CD8-positive, alpha-beta memory T cell (primary cell): ENCODE measurements at regions of chr13 and their contacts with region 1.

Region 1: GRCh38 chr13:100573121-100573520 is 15.5 kb downstream of the GGACT start:
- DNase-seq: peak; percentile 53 to 77 (median 65)
- H3K4me3 ChIP-seq: no peak overlapping the region
- H3K4me3 Mint-ChIP-seq: no peak overlapping the region
- H3K27ac ChIP-seq: no peak overlapping the region
- H3K27ac Mint-ChIP-seq: no peak overlapping the region
- H3K4me1 ChIP-seq: peaks cover 13% of the 10 kb centered on the region
- H3K4me1 Mint-ChIP-seq: peaks cover 12 to 18% (median 16%) of the 10 kb centered on the region in 3 donors
- H3K27me3 ChIP-seq: no peaks in the 10 kb centered on the region
- H3K27me3 Mint-ChIP-seq: no peaks in the 10 kb centered on the region

Region 2: DNA sequence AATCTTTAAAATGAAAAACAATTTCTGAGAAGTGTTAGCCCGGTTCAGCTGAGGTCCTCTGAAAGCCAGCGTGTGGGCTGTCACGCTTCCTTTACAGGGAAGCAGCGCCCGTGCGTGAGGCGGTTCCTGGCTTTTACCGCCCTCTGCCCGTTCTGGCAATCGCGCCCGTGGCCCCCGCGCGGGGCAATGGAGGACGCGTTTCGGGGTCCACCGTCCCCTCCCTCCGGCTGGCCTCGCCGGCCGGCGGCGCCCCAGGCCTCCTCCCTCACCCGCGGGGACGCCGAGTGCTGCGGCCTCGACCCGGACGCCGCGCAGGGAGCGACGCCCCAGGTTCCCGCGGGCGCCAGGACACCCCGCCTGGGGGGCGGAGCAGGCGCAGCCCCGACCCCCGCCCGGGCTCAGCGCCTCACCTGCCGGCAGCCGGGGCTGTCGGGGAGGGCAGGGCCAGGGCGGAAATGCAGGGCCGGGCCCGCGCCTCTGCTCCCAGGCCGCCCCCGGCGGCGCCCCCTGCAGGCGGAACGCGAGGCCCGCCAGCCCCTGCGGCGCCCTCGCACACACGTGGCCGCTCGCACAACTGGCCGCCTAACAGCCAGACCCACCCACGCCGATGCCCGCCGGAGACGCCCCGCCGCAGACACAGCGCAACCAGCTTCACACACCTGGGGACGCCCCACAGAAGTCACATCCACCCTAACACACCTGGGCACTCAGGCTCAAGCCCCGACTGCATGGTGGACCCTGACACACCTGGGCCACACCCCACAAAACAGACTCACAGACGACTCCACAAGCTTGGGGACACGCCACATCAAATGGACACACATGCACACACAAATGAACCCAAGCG is 15.4 kb after region 1 on chr13 and contains the start of gene GGACT:
- CTCF ChIA-PET with region 1: interaction called, 47 read pairs
- POLR2A ChIA-PET with region 1: interaction called, 5 read pairs
- DNase-seq: peak; percentile 75 to 87 (median 83)
- H3K4me3 ChIP-seq: peak within 1 kb of the TSS; percentile 54
- H3K4me3 Mint-ChIP-seq: peak within 1 kb of the TSS; percentile 81 to 91 (median 86)
- H3K27ac ChIP-seq: peak within 1 kb of the TSS; percentile 59
- H3K27ac Mint-ChIP-seq: peak within 1 kb of the TSS; percentile 72 to 94 (median 84)
- H3K4me1 ChIP-seq: peaks cover 42% of the 10 kb centered on the region
- H3K4me1 Mint-ChIP-seq: peaks cover 39 to 48% (median 47%) of the 10 kb centered on the region in 3 donors
- H3K27me3 ChIP-seq: no peaks in the 10 kb centered on the region
- H3K27me3 Mint-ChIP-seq: no peaks in the 10 kb centered on the region
- total RNA-seq, gene GGACT: 4.9 to 5.7 TPM

Region 3: DNA sequence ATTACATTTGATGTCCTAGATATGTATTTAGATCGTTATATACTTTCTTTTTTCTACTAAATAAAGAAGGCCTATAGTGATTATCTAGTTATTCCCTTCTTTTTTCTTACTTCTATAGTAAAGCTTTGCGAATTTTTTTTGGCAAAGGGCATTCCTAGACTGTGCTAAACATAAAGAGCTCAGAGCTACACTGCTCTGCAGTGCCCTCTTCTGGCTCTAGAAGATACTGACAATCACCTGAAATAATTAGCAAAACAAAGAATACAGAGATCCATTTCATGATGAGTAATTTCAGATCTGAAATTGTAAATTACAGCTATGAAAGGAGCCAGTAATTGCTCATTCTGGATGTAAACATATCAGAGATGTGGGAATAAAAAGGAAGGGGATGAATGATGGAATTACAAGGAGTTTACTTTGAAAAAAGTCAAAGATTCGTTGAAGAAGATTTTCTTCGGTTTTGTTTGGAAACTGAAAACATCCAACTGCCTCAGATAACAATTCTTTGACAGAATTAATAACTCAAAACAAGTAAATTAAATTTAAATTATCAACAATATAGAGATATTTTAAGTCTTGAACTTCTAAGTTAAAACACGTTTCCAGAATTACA is 554.7 kb after region 1 on chr13:
- CTCF ChIA-PET with region 1: interaction called, 10 read pairs
- POLR2A ChIA-PET with region 1: no interaction called
- DNase-seq: peak in 1 of 5 donors; percentile 12
- H3K4me3 ChIP-seq: no peak overlapping the region
- H3K4me3 Mint-ChIP-seq: no peak overlapping the region
- H3K27ac ChIP-seq: no peak overlapping the region
- H3K27ac Mint-ChIP-seq: no peak overlapping the region
- H3K4me1 ChIP-seq: no peaks in the 10 kb centered on the region
- H3K4me1 Mint-ChIP-seq: no peaks in the 10 kb centered on the region
- H3K27me3 ChIP-seq: no peaks in the 10 kb centered on the region
- H3K27me3 Mint-ChIP-seq: peaks cover 4 to 11% of the 10 kb centered on the region in 2 donors